Tibial artery (tissue), 4 donors: ENCODE measurements at regions of chr12 and their contacts with region 1.

Region 1: DNA sequence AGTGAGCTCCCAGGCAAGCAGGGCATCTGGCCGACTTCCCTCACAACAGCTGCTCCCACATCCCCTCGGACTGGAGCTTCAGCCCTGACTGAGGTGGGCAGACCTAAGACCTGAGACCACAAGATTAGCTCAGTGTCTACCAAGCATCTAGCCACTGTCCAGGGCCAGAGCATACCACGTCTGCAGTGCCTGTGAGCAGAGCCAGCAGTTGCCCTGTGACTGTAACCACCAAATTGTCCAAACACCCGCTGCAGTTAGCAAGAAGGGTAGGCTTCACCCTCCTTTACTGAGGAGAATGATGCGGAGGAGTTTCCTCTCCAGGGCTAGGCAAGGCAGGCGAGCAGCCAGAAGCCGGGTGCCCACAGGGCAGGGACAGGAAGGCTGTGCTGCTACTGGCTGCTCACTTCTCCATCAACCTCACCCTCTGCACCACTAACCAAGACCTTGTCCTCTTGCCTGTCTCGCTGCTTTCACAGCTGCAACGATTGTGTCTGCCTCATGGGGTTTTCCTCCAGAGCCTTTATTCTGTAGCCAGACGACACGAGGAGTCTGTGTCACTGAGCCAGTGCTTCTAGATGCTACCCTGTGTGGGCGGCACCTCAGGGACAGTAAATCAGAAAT is 53.9 kb downstream of the ANAPC7 start:
- DNase-seq: no peak
- H3K4me3 ChIP-seq: no peak overlapping the region
- H3K27ac ChIP-seq: no peak overlapping the region
- H3K4me1 ChIP-seq: peaks cover 0 to 2% (median 0%) of the 10 kb centered on the region in 4 donors
- H3K27me3 ChIP-seq: no peaks in the 10 kb centered on the region
- CTCF ChIP-seq: no peak

Region 2: DNA sequence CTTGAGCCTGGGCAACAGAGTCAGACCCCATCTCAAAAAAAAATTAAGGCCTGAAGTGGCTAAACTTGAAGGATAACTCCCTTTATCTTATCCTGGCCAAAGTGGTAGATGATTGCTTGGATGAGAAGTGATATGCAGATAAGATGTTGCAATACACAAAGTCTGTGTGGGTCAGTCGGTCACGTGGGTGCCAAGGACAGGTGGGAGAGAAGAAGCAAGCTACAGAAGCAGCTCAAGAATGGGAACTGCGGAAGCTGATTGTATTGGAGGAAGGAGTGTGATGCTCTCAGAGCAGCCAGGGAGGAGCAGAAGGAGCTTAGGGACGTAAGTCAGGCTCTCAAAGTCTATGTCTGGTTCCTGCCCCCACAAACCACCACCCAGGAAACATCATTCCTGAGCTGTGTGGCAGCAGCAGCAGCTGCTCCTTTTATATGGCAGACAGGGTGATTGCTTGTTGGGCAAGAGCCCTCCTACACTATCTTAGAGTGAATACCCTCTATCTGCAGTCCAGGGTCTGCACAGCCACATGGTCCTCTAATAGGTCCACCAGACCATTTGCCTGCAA is 14.1 kb before region 1 on chr12:
- intact Hi-C with region 1: loop called (anchors 2 kb)
- DNase-seq: no peak
- H3K4me3 ChIP-seq: no peak overlapping the region
- H3K27ac ChIP-seq: no peak overlapping the region
- H3K4me1 ChIP-seq: peaks cover 0 to 26% (median 6%) of the 10 kb centered on the region in 4 donors
- H3K27me3 ChIP-seq: no peaks in the 10 kb centered on the region
- CTCF ChIP-seq: no peak

Region 3: GRCh38 chr12:110885152-110885840 is 535.7 kb after region 1 on chr12:
- intact Hi-C with region 1: no loop called
- DNase-seq: no peak
- H3K4me3 ChIP-seq: no peak overlapping the region
- H3K27ac ChIP-seq: no peak overlapping the region
- H3K4me1 ChIP-seq: no peaks in the 10 kb centered on the region
- H3K27me3 ChIP-seq: no peaks in the 10 kb centered on the region
- CTCF ChIP-seq: no peak